CD4-positive, alpha-beta T cell (primary cell): ENCODE measurements at regions of chr4 and their contacts with region 1.

Region 1: DNA sequence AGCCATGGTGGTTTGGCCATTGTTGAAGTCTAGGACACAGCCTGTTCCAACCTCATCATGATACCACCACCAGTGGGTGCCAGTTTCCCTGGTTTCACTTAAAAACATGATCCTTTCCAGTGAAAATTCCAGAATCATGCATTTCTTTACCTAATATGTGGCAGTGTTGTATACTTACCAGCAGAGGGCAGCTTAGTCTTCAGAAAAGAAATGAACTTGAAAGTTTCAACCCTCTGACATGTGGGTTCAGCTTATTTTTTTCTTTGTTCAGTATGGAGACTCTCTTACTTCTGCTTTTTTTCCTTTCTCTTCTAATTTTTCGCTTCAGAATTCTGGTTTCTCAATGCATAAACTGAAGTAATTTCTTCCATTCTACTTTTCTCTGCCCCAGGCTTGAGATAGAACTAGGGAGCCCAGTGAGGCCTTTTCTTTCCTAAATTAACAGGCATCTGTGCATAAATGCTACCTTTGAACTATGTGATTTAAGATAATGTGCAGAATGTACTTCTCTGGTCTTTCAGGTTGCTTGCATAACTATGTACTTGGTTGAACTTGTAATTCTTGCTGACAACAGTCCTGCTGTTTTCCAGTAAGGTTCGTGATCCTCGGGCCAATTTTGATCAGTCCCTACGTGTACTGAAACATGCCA is 10.7 kb downstream of the LIAS start:
- DNase-seq: peak in 4 of 14 experiments; percentile 11 to 72 (median 65)
- ATAC-seq: peak; percentile 94
- H3K4me3 ChIP-seq: no peak overlapping the region
- H3K4me3 Mint-ChIP-seq: no peak overlapping the region
- H3K27ac ChIP-seq: no peak overlapping the region
- H3K27ac Mint-ChIP-seq: no peak overlapping the region
- H3K4me1 ChIP-seq: no peaks in the 10 kb centered on the region
- H3K4me1 Mint-ChIP-seq: peaks cover 7% of the 10 kb centered on the region
- H3K27me3 ChIP-seq: no peaks in the 10 kb centered on the region
- H3K27me3 Mint-ChIP-seq: no peaks in the 10 kb centered on the region
- CTCF ChIP-seq: peak; percentile 92

Region 2: GRCh38 chr4:39658756-39659155 is 189.2 kb after region 1 on chr4:
- CTCF ChIA-PET with region 1: no interaction called
- POLR2A ChIA-PET with region 1: no interaction called
- intact Hi-C with region 1: loop called (anchors 2 kb)
- DNase-seq: no peak
- ATAC-seq: no peak
- H3K4me3 ChIP-seq: no peak overlapping the region
- H3K4me3 Mint-ChIP-seq: no peak overlapping the region
- H3K27ac ChIP-seq: no peak overlapping the region
- H3K27ac Mint-ChIP-seq: no peak overlapping the region
- H3K4me1 ChIP-seq: no peaks in the 10 kb centered on the region
- H3K4me1 Mint-ChIP-seq: no peaks in the 10 kb centered on the region
- H3K27me3 ChIP-seq: no peaks in the 10 kb centered on the region
- H3K27me3 Mint-ChIP-seq: no peaks in the 10 kb centered on the region
- CTCF ChIP-seq: peak; percentile 14

Region 3: GRCh38 chr4:39846120-39846519 is 376.6 kb after region 1 on chr4:
- CTCF ChIA-PET with region 1: no interaction called
- POLR2A ChIA-PET with region 1: no interaction called
- intact Hi-C with region 1: loop called in 1 of 2 experiments (anchors 5 kb)
- DNase-seq: no peak
- ATAC-seq: no peak
- H3K4me3 ChIP-seq: no peak overlapping the region
- H3K4me3 Mint-ChIP-seq: no peak overlapping the region
- H3K27ac ChIP-seq: no peak overlapping the region
- H3K27ac Mint-ChIP-seq: no peak overlapping the region
- H3K4me1 ChIP-seq: no peaks in the 10 kb centered on the region
- H3K4me1 Mint-ChIP-seq: no peaks in the 10 kb centered on the region
- H3K27me3 ChIP-seq: no peaks in the 10 kb centered on the region
- H3K27me3 Mint-ChIP-seq: no peaks in the 10 kb centered on the region
- CTCF ChIP-seq: no peak

Region 4: DNA sequence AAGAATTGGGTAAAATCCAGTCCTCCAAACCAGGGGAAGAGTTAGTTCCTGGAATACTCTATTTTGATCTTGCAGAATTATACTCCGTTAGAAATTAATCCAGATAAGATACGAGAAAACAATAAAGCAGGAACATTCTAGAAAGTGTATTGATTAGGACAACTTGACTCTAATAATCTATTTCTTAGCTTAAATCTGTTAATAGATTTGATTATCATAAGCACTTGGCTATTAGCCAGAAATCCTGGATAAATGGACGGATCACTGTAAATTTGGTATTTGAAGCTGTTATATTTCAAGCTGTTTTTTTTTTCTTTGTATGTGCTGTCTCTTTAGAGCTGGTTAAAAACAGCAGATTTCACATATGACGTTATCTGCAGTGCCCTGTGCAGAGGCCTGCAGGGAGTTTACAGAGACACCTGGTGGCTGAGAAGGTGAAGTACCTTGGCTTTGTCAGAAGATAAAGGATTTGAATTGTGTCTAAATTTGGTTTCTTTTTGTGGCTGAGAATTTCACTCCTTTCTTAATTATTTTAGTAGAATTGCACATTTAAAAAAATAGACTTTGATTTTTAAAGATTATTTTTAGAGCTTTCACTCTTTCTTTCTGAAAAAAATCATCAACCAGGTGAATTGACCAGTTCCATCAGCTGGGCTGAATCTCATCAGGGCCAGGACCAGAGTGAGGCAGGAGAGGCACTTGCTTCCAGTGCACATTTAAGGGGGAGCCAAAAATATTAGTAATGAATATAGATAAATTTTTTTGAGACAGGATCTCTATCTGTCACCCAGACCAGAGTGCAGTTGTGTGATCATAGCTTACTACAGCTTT is 855.9 kb after region 1 on chr4:
- CTCF ChIA-PET with region 1: no interaction called
- POLR2A ChIA-PET with region 1: no interaction called
- intact Hi-C with region 1: no loop called
- DNase-seq: peak; percentile 46 to 89 (median 56)
- ATAC-seq: peak; percentile 100
- H3K4me3 ChIP-seq: no peak overlapping the region
- H3K4me3 Mint-ChIP-seq: no peak overlapping the region
- H3K27ac ChIP-seq: no peak overlapping the region
- H3K27ac Mint-ChIP-seq: peak overlapping the region; percentile 6
- H3K4me1 ChIP-seq: no peaks in the 10 kb centered on the region
- H3K4me1 Mint-ChIP-seq: peaks cover 21% of the 10 kb centered on the region
- H3K27me3 ChIP-seq: no peaks in the 10 kb centered on the region
- H3K27me3 Mint-ChIP-seq: no peaks in the 10 kb centered on the region
- CTCF ChIP-seq: peak; percentile 89